HCT116 (cell line): ENCODE measurements at regions of chr5 and their contacts with region 1.

Region 1: GRCh38 chr5:137498736-137499505 is at the start of gene SPOCK1:
- DNase-seq: peak; percentile 12
- ATAC-seq: peak; percentile 98
- H3K4me3 ChIP-seq: no peak within 1 kb of the TSS
- H3K27ac ChIP-seq: no peak within 1 kb of the TSS
- H3K4me1 ChIP-seq: no peaks in the 10 kb centered on the region
- H3K27me3 ChIP-seq: peaks cover 39% of the 10 kb centered on the region
- CTCF ChIP-seq: peak; percentile 33 to 47 (median 41); a peak in 5 of 6 replicates
- POLR2A ChIP-seq: no peak
- RAD21 ChIP-seq: peak; percentile 63
- total RNA-seq, gene SPOCK1: 0.27 TPM

Region 2: GRCh38 chr5:136802383-136802782 is 696.5 kb before region 1 on chr5:
- CTCF ChIA-PET with region 1: no interaction called
- POLR2A ChIA-PET with region 1: no interaction called
- RAD21 ChIA-PET with region 1: no interaction called
- intact Hi-C with region 1: loop called (anchors 10 kb)
- DNase-seq: no peak
- ATAC-seq: no peak; the same call in 1 of the 2 replicates
- H3K4me3 ChIP-seq: no peak overlapping the region
- H3K27ac ChIP-seq: no peak overlapping the region
- H3K4me1 ChIP-seq: no peaks in the 10 kb centered on the region
- H3K27me3 ChIP-seq: 0 out of 2 replicates have a peak, but pooled peaks cover 3% of the 10 kb centered on the region
- CTCF ChIP-seq: peak in 2 of 3 experiments; percentile 25 to 33; a peak in 2 of 6 replicates
- POLR2A ChIP-seq: no peak
- RAD21 ChIP-seq: peak; percentile 57

Region 3: DNA sequence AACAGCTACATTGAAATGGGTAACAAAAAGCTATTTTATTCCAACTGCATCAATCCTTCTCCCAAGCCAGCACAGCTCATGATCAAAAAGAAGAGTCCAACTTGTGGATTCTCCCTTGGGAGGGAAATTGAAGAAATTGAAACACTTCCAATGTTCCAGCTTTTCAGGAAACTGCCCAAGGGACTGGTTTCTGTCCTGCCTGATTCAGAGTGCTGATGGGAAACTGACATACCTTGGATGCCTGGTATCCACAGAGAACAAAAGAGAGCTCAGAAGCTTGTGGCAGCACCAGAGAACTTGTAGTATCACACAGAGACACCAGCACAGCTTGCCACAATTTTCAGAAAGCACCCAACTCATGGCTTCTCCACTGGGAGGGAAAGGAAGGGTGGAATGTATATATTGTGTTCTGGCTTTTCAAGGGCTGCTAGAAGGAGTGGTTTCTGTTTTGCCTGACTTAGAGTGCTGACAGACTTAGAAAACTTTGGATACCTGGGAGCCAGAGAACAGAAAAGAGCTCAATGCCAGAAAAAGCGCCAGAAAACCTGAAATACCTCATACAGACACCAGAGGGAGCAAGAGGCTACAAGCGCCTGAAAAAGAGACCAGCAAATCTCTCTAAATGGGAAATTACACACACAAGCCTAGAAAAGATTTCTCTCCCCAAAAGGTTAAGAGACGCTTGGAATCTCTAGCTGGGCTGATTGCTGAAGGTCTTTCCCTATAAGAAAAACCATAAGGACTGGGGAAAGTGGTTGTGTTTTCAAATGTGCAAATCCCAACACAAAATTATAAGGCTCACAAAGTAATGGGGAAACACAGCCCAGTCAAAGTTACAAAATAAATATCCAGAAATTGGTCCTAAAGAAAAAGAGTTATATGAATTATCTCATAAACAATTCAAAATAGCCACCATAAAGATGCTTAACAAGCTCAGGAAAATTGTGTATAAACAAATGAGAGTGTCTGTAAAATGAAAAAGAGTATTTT is 178.6 kb before region 1 on chr5:
- CTCF ChIA-PET with region 1: interaction called, 9 read pairs
- POLR2A ChIA-PET with region 1: no interaction called
- RAD21 ChIA-PET with region 1: interaction called, 4 read pairs
- intact Hi-C with region 1: loop called (anchors 1 kb)
- DNase-seq: peak; percentile 21
- ATAC-seq: peak; percentile 59
- H3K4me3 ChIP-seq: no peak overlapping the region
- H3K27ac ChIP-seq: no peak overlapping the region
- H3K4me1 ChIP-seq: no peaks in the 10 kb centered on the region
- H3K27me3 ChIP-seq: peaks cover 69% of the 10 kb centered on the region
- CTCF ChIP-seq: peak; percentile 63 to 77 (median 69); a peak in 5 of 6 replicates
- POLR2A ChIP-seq: no peak
- RAD21 ChIP-seq: peak; percentile 65

Region 4: GRCh38 chr5:137344723-137345322 is 154.1 kb before region 1 on chr5:
- CTCF ChIA-PET with region 1: no interaction called
- POLR2A ChIA-PET with region 1: no interaction called
- RAD21 ChIA-PET with region 1: no interaction called
- intact Hi-C with region 1: loop called (anchors 1 kb)
- DNase-seq: peak; percentile 36
- ATAC-seq: peak; percentile 52
- H3K4me3 ChIP-seq: no peak overlapping the region
- H3K27ac ChIP-seq: no peak overlapping the region
- H3K4me1 ChIP-seq: peaks cover 0 to 4% of the 10 kb centered on the region in 2 experiments; a peak in 1 of 4 replicates
- H3K27me3 ChIP-seq: peaks cover 27% of the 10 kb centered on the region
- CTCF ChIP-seq: peak; percentile 54 to 92 (median 89); a peak in 5 of 6 replicates
- POLR2A ChIP-seq: no peak
- RAD21 ChIP-seq: peak; percentile 61